HEK293 (cell line): ENCODE measurements at regions of chr2 and their contacts with region 1.

Region 1: GRCh38 chr2:42086500-42086953 is 38.7 kb downstream of the PKDCC start:
- H3K4me3 ChIP-seq: no peak overlapping the region
- H3K27ac ChIP-seq: no peak overlapping the region
- H3K4me1 ChIP-seq: peaks cover 9% of the 10 kb centered on the region
- CTCF ChIP-seq: peak; percentile 59; the same call in 1 of the 2 replicates

Region 2: GRCh38 chr2:41160439-41160838 is 926.1 kb before region 1 on chr2:
- CTCF ChIA-PET with region 1: no interaction called
- POLR2A ChIA-PET with region 1: no interaction called
- H3K4me3 ChIP-seq: no peak overlapping the region
- H3K27ac ChIP-seq: no peak overlapping the region
- H3K4me1 ChIP-seq: no peaks in the 10 kb centered on the region
- CTCF ChIP-seq: no peak

Region 3: GRCh38 chr2:41782306-41783158 is 304.0 kb before region 1 on chr2:
- CTCF ChIA-PET with region 1: no interaction called
- POLR2A ChIA-PET with region 1: no interaction called
- H3K4me3 ChIP-seq: no peak overlapping the region
- H3K27ac ChIP-seq: no peak overlapping the region
- H3K4me1 ChIP-seq: no peaks in the 10 kb centered on the region
- CTCF ChIP-seq: peak; percentile 65

Region 4: DNA sequence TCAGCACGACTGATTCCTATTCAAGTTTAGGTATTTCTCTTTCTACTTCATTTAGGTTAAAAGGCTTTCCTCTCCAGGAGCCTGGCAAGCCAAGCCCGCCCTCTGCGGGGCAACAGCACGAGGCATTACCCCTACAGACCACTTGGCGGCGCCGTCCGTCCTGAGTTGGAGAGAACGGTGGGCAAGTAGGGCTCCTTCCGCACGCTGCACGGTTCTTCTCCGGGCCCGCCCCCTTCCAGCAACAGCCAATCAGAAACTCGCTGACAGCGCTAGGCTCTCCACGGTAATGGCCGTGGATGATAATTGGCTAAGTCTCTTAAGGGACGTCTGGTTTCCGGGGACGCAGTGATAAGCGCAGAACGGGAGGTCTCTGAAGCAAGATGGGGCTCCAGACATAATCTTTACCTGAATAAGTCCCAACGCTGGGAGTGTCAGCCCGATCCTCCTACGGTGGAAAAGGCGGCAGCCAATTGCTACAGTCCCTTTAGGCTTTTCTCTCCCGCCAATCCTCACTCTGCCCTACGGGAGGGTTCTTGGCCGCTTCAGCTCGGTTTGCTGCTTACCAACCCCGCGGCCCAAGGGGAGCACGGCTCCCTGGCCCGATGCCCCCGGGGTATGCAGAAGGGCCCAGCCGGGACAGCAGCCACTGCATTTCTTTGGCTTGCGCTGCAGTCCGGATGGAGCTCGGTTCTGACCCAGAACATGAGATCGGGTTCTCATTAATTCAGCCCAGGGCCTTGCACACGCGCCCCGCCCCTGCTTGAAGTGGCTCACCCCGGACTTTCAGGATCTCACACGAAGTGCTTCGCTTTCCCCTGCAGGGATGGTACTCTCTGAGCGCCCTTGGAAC is 245.6 kb before region 1 on chr2:
- CTCF ChIA-PET with region 1: interaction called, 21 read pairs
- POLR2A ChIA-PET with region 1: no interaction called
- H3K4me3 ChIP-seq: peak overlapping the region; percentile 61
- H3K27ac ChIP-seq: peak overlapping the region; percentile 65; the same call in 1 of the 2 replicates
- H3K4me1 ChIP-seq: 0 out of 2 replicates have a peak, but pooled peaks cover 4% of the 10 kb centered on the region
- CTCF ChIP-seq: peak; percentile 96

Region 5: DNA sequence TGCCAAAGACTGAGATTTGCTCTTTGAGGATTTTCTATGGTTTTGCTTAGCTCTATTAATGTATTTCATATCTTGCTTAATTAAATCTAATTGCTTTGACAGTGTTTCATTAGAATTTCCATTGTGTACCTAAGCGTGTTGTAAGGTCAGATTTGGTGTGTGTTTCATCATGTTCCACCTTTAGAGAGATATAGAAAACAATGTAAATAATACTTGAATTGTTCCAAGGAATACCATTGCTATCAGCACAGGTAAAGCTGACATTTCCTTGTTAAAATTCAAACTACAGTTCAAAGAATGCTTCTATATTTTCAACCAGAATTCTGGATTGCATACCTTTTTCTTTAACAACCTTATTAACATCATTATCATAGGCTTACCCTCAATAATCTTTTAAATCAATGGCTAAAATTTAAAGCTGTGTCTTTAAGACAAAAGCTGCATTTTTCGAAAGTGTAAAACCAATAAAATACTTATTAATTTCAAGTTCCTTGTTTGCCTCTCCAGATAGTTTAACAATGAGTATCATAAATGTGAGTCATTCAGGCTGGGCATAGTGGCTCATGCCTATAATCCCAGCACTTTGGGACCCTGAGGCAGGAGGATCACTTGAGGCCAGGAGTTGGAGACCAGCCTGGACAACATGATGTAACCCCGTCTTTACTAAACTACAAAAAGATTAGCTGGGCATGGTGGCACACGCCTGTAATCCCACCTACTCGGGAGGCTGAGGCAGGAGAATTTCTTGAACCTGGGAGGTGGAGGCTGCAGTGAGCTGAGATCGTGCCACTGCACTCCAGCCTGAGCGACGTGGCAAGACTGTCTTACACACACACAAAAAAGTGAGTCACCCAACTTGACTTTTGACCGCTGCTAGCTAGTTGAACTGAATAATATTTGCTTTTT is 226.7 kb before region 1 on chr2:
- CTCF ChIA-PET with region 1: interaction called, 369 read pairs
- POLR2A ChIA-PET with region 1: no interaction called
- H3K4me3 ChIP-seq: no peak overlapping the region
- H3K27ac ChIP-seq: no peak overlapping the region
- H3K4me1 ChIP-seq: no peaks in the 10 kb centered on the region
- CTCF ChIP-seq: no peak

Region 6: DNA sequence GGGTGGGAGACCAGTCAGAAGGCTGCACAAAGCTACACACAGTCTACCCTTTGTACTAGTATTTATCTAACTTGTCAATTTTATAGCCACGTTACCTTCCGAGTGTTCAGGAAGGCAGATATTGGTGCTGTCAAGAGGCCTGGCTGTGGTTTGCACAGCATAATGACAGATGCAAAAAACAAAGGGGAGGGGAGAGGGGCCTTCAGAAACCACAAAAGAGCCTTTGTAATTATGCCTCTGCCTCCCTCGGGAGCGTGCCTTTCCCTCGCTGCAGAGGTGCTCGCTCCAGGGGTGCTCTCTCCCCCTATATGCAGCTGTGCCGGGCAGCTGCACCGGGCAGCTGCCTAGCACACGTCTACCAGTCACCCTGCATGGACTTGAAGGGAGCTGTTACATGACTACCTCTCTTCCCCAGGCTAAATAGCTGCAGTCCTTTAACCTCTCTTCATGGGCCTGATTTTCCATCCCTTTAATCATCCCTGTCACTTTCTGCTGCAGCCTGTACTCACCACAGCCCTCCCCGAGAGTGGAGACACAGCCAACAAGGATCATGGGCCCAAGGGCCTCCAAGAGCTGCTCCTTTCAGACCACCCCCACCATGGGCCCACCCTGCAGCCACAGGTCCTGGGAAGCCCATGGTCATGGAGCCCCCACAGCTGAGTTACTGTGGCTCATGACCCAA is 207.2 kb before region 1 on chr2:
- CTCF ChIA-PET with region 1: interaction called, 369 read pairs
- POLR2A ChIA-PET with region 1: no interaction called
- H3K4me3 ChIP-seq: no peak overlapping the region
- H3K27ac ChIP-seq: peak overlapping the region; percentile 31; the same call in 1 of the 2 replicates
- H3K4me1 ChIP-seq: peaks cover 14% of the 10 kb centered on the region
- CTCF ChIP-seq: no peak

Region 7: GRCh38 chr2:42072349-42073118 is 14.0 kb before region 1 on chr2:
- CTCF ChIA-PET with region 1: interaction called, 12 read pairs
- POLR2A ChIA-PET with region 1: no interaction called
- H3K4me3 ChIP-seq: no peak overlapping the region
- H3K27ac ChIP-seq: no peak overlapping the region
- H3K4me1 ChIP-seq: no peaks in the 10 kb centered on the region; the same call in 1 of the 2 replicates
- CTCF ChIP-seq: peak; percentile 24; the same call in 1 of the 2 replicates

Region 8: DNA sequence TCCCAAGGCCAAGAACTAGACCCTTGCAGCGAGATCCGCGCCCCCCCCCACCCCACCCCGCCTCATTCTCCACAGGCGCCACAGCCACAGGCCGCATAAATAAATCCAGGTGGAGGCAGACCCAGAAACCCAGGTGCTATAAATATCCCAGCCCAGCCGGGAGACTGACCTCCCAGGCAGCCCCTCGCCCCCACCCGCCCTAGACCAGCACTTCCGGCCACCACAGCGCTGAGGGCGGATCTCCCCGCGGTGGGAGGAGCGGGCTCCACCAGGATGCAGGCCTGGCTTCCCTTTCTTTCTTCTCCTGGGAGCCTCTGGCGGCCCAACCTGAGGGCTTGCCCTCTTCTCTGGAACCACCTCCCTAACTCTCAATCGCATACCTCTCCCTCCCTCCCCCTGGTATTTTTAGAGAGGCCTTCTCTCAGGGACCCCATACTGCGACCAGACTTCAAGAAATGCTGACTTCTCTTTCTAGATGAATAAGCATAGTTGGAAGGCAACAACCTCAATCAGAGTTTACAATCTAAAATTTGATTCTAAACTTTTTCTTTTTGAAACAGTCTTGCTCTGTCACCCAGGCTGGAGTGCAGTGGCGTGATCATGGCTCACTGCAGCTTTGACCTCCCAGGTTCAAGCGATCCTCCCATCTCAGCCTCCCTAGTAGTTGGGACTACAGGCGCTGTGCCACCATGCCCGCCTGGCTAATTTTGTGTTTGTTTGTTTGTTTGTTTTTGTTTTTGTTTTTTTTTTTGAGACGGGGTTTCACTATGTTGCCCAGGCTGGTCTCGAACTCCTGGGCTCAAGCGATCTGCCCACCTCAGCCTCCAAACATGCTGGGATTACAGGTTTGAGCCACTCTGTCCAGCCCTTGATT is 16.3 kb after region 1 on chr2:
- CTCF ChIA-PET with region 1: no interaction called
- POLR2A ChIA-PET with region 1: no interaction called
- H3K4me3 ChIP-seq: peak overlapping the region; percentile 35
- H3K27ac ChIP-seq: no peak overlapping the region
- H3K4me1 ChIP-seq: no peaks in the 10 kb centered on the region
- CTCF ChIP-seq: no peak

Region 9: GRCh38 chr2:42281416-42282081 is 195.0 kb after region 1 on chr2:
- CTCF ChIA-PET with region 1: no interaction called
- POLR2A ChIA-PET with region 1: no interaction called
- H3K4me3 ChIP-seq: no peak overlapping the region
- H3K27ac ChIP-seq: no peak overlapping the region
- H3K4me1 ChIP-seq: no peaks in the 10 kb centered on the region
- CTCF ChIP-seq: no peak